ENCODE measurements at regions of chr15 and their contacts with region 1.

Region 1: GRCh38 chr15:78162038-78162437 is 12.9 kb downstream of the IDH3A start:
- DNase-seq: peak in 31 of 35 experiments; percentile 22 to 80 (median 48)
- ATAC-seq: peak; percentile 49 to 84 (median 66)
- H3K4me3 ChIP-seq: no peak overlapping the region
- H3K4me3 Mint-ChIP-seq: peak overlapping the region in 2 of 3 donors; percentile 15 to 31
- H3K27ac ChIP-seq: no peak overlapping the region
- H3K27ac Mint-ChIP-seq: peak overlapping the region; percentile 80 to 87
- H3K4me1 ChIP-seq: no peaks in the 10 kb centered on the region
- H3K4me1 Mint-ChIP-seq: peaks cover 0 to 10% (median 9%) of the 10 kb centered on the region in 3 donors
- H3K27me3 ChIP-seq: no peaks in the 10 kb centered on the region
- H3K27me3 Mint-ChIP-seq: no peaks in the 10 kb centered on the region

Region 2: DNA sequence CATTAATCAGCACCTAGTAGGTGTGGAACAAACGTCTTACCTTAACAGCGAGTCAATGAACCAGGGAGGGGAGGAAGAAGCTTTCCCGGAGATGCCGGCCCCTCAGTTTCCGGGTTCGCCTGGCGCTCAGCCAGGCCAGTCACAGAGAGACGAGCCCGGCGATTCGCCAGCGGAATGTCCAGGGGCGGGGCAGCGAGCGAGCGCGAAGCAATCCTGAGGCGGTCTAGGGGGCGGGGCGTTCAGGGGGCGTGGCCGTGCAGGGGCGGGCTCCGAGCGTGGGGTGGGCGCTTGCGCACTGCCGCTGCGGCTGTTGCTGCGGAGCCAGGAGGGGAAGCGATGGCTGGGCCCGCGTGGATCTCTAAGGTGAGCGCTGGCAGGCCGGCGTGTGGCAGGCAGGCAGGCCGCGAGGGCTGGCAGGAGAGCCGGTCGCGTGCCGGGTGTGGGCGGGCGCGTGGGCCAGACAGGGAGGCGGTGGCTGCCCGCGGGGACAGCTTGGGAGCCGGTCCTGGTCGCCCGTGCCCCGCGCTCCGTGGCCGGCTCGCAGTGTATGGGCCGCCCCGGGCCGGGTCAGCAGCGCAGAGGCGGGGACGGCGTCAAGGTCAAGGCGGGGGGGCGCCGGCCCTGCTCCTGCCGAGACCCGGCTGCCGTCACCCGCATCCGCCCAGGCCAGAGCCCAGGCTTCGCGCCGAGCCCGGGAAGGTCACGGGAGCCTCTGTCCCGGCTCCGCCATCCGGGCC is 12.8 kb before region 1 on chr15 and contains the start of gene IDH3A:
- CTCF ChIA-PET with region 1: interaction called in 1 of 2 experiments, 10 read pairs
- POLR2A ChIA-PET with region 1: no interaction called
- DNase-seq: peak; percentile 97 to 100 (median 100)
- ATAC-seq: peak; percentile 94 to 97 (median 95)
- H3K4me3 ChIP-seq: peak within 1 kb of the TSS; percentile 67 to 82
- H3K4me3 Mint-ChIP-seq: peak within 1 kb of the TSS; percentile 91 to 94 (median 93)
- H3K27ac ChIP-seq: peak within 1 kb of the TSS; percentile 18
- H3K27ac Mint-ChIP-seq: peak within 1 kb of the TSS; percentile 86 to 88
- H3K4me1 ChIP-seq: peaks cover 10 to 22% of the 10 kb centered on the region in 2 experiments
- H3K4me1 Mint-ChIP-seq: peaks cover 36 to 44% (median 40%) of the 10 kb centered on the region in 3 donors
- H3K27me3 ChIP-seq: no peaks in the 10 kb centered on the region
- H3K27me3 Mint-ChIP-seq: no peaks in the 10 kb centered on the region
- total RNA-seq, gene IDH3A: 40.3 to 64.7 (median 48.5) TPM

Region 3: GRCh38 chr15:78329625-78330024 is 167.6 kb after region 1 on chr15:
- CTCF ChIA-PET with region 1: no interaction called
- POLR2A ChIA-PET with region 1: no interaction called
- DNase-seq: no peak
- ATAC-seq: no peak
- H3K4me3 ChIP-seq: no peak overlapping the region
- H3K4me3 Mint-ChIP-seq: no peak overlapping the region
- H3K27ac ChIP-seq: no peak overlapping the region
- H3K27ac Mint-ChIP-seq: no peak overlapping the region
- H3K4me1 ChIP-seq: no peaks in the 10 kb centered on the region
- H3K4me1 Mint-ChIP-seq: no peaks in the 10 kb centered on the region
- H3K27me3 ChIP-seq: peaks cover 0 to 3% of the 10 kb centered on the region in 2 experiments
- H3K27me3 Mint-ChIP-seq: no peaks in the 10 kb centered on the region